Activated CD4-positive, alpha-beta T cell treated with anti-CD3 and anti-CD28 coated beads, Interleukin-2, amount 10 ng/mL, durations not matched to agents 7 days and 5 days (primary cell): ENCODE measurements at regions of chr4 and their contacts with region 1.

Region 1: GRCh38 chr4:40309250-40309774 is 25.8 kb upstream of the CHRNA9 start:
- DNase-seq: peak; percentile 94
- H3K4me3 Mint-ChIP-seq: peak overlapping the region; percentile 55
- H3K27ac Mint-ChIP-seq: peak overlapping the region; percentile 99
- H3K4me1 Mint-ChIP-seq: peaks cover 86% of the 10 kb centered on the region
- H3K27me3 Mint-ChIP-seq: no peaks in the 10 kb centered on the region

Region 2: GRCh38 chr4:40056716-40057585 is 252.4 kb before region 1 on chr4 and contains the start of gene N4BP2:
- CTCF ChIA-PET with region 1: interaction called, 19 read pairs
- POLR2A ChIA-PET with region 1: no interaction called
- DNase-seq: peak; percentile 75
- H3K4me3 Mint-ChIP-seq: peak within 1 kb of the TSS; percentile 92
- H3K27ac Mint-ChIP-seq: peak within 1 kb of the TSS; percentile 97
- H3K4me1 Mint-ChIP-seq: peaks cover 36% of the 10 kb centered on the region
- H3K27me3 Mint-ChIP-seq: no peaks in the 10 kb centered on the region
- total RNA-seq, gene N4BP2: 32.2 to 39.2 TPM

Region 3: GRCh38 chr4:40194602-40195161 is 114.6 kb before region 1 on chr4:
- CTCF ChIA-PET with region 1: interaction called, 7 read pairs
- POLR2A ChIA-PET with region 1: interaction called, 10 read pairs
- DNase-seq: peak; percentile 77
- H3K4me3 Mint-ChIP-seq: peak overlapping the region; percentile 94
- H3K27ac Mint-ChIP-seq: peak overlapping the region; percentile 98
- H3K4me1 Mint-ChIP-seq: peaks cover 65% of the 10 kb centered on the region
- H3K27me3 Mint-ChIP-seq: no peaks in the 10 kb centered on the region

Region 4: DNA sequence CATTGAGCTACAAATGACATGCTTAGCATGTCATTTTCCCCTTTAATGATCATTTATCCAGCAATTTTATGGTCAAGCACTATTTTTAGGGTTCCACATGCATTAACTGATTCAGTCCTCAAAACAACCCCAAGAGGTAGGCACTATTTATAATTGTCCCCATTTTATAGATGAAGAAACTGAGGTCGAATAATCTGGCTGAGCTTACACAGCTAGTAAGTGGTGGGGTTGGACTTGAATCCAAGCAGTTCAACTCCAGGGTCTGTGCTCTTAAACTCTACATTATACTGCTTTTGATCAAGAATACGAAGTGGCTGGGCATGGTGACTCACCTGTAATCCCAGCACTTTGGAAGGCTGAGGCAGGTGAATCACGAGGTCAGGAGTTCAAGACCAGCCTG is 22.6 kb after region 1 on chr4:
- CTCF ChIA-PET with region 1: no interaction called
- POLR2A ChIA-PET with region 1: no interaction called
- DNase-seq: no peak
- H3K4me3 Mint-ChIP-seq: no peak overlapping the region
- H3K27ac Mint-ChIP-seq: no peak overlapping the region
- H3K4me1 Mint-ChIP-seq: peaks cover 2% of the 10 kb centered on the region
- H3K27me3 Mint-ChIP-seq: peaks cover 4% of the 10 kb centered on the region